ENCODE measurements at regions of chr14 and their contacts with region 1.

Region 1: GRCh38 chr14:105490572-105491366 is at the start of gene TEDC1:
- DNase-seq: peak; percentile 100
- ATAC-seq: peak; percentile 80
- H3K4me3 Mint-ChIP-seq: peak within 1 kb of the TSS; percentile 81
- H3K27ac Mint-ChIP-seq: peak within 1 kb of the TSS; percentile 86
- H3K4me1 Mint-ChIP-seq: peaks cover 22% of the 10 kb centered on the region
- H3K27me3 Mint-ChIP-seq: no peaks in the 10 kb centered on the region
- total RNA-seq, gene TEDC1: 21.7 to 31.8 TPM

Region 2: DNA sequence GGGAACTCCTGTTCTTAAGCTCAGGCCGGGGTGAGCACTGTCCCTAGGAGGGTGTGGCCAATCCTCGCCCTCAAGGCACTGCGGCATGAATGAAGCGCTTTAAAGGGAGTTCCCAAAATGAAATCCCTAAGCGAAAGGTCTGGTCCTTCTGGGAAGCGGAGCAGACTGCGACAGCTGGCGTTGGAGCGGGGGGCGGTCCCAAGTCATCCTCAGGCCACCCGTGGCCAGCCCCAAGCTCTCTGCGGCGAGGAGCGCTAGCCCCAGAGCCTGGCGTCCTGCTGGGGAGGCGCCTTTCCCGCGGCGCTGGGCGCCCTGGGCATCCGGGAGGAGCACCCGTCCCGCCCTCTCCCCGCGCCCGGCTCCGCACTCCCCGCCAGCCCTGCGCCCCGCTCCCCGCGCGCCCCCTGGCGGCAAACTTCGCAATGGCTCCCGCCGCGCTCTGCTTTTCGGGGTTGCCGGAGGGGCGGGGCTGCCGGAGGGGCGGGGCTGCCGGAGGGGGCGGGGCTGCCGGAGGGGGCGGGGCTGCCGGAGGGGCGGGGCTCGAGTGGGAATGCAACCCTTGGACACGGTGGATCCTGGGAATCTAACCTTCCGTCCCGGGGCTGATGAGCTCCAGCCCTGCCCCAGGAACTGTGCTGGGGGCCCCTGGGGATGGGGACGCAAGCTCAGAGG is 664.4 kb before region 1 on chr14:
- CTCF ChIA-PET with region 1: no interaction called
- POLR2A ChIA-PET with region 1: no interaction called
- intact Hi-C with region 1: loop called in 1 of 2 experiments (anchors 1 kb)
- DNase-seq: peak; percentile 97
- ATAC-seq: peak; percentile 93
- H3K4me3 Mint-ChIP-seq: peak overlapping the region; percentile 73
- H3K27ac Mint-ChIP-seq: no peak overlapping the region
- H3K4me1 Mint-ChIP-seq: peaks cover 13% of the 10 kb centered on the region
- H3K27me3 Mint-ChIP-seq: peaks cover 13% of the 10 kb centered on the region

Region 3: DNA sequence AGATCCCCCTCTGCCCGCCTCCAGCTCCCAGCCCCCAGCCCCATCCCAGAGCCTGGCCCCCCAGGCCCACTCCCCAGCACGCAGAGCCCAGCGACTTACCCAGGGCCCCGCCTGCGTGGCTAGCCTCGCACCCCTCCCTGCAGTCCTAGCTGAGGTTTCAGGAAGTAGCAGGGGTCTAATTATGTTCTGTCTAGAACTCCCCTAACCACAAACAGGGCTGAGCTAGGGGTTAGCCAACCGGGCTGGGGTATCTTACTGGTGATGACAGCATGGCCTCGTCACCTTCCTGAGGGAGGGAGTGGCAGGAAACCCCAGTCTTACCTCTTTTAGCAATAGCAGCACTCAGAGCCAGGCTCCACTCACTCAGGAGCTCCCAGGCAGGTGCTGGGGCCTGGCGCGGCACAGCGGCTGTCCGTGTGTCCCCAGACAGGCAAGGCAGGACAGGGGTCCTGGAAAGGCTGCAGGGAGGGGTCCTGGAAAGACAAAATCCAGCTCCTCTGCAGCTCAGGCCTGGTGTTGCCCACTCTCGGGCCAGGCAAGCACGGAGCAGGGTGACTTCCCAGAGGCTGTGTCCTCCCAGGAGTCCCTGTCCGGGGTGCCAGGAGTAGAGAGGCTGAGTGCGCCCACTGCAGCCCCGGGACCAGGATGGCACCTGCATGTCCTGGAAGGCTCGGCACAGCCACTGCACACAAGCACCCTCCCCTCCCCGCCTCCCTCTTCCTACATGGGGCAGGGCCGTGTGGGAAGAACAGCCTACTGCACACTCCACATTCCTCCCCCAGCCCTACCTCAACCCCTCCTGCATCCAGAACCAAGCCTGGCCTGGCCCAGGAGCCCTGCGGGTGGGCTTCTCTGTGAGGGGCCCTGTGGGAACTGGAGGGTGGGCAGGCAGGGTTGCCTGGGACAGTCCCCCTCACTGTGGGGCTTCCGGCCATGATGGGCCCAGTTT is 425.2 kb before region 1 on chr14 and contains the start of gene GPR132:
- CTCF ChIA-PET with region 1: interaction called, 4 read pairs
- POLR2A ChIA-PET with region 1: no interaction called
- intact Hi-C with region 1: loop called (anchors 1 to 10 kb)
- DNase-seq: peak; percentile 93
- ATAC-seq: peak; percentile 78
- H3K4me3 Mint-ChIP-seq: peak within 1 kb of the TSS; percentile 92
- H3K27ac Mint-ChIP-seq: peak within 1 kb of the TSS; percentile 96
- H3K4me1 Mint-ChIP-seq: peaks cover 74% of the 10 kb centered on the region
- H3K27me3 Mint-ChIP-seq: no peaks in the 10 kb centered on the region
- total RNA-seq, gene GPR132: 27.7 to 35.4 TPM

Region 4: DNA sequence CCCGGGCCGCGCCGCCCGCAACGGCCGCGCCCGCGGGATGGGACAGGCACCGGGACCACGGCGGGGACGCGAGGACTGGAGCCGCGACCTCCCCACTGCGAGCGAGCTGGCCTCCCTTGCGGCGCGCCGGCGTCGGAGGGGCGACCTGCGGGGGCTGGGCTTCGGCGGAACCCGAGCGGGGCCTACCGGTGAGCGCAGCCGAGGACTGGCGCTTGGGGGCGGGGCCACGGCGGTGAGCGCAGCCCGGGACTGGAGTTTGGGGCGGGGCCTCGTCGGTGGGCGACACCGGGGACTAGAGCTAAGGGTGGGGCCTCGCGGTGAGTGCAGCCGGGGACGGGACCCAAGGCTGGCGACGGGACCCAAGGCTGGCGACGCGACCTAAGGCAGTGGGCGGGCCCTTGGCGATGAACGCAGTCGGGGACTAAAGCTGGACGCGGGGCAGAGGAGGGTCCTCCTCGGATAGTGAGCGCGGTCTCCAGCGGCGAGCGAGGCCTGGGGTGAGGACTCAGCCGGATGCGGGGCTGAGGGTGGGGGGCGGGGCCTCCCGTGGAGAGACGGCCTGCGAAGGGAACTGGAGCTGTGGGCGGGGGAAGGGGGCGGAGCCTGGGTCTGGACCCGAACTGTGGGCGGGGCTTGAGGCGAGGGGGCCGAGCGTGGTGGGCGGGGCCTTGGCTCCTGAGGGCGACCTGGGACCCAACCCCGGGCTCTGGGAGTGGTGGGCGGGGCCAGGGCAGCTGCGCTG is 189.8 kb before region 1 on chr14 and contains the start of gene BRF1:
- CTCF ChIA-PET with region 1: no interaction called
- POLR2A ChIA-PET with region 1: interaction called, 5 read pairs
- intact Hi-C with region 1: loop called in 1 of 2 experiments (anchors 1 kb)
- DNase-seq: peak; percentile 100
- ATAC-seq: peak; percentile 92
- H3K4me3 Mint-ChIP-seq: peak within 1 kb of the TSS; percentile 86
- H3K27ac Mint-ChIP-seq: peak within 1 kb of the TSS; percentile 86
- H3K4me1 Mint-ChIP-seq: peaks cover 39% of the 10 kb centered on the region
- H3K27me3 Mint-ChIP-seq: no peaks in the 10 kb centered on the region
- total RNA-seq, gene BRF1: 20.0 to 28.1 TPM

Region 5: DNA sequence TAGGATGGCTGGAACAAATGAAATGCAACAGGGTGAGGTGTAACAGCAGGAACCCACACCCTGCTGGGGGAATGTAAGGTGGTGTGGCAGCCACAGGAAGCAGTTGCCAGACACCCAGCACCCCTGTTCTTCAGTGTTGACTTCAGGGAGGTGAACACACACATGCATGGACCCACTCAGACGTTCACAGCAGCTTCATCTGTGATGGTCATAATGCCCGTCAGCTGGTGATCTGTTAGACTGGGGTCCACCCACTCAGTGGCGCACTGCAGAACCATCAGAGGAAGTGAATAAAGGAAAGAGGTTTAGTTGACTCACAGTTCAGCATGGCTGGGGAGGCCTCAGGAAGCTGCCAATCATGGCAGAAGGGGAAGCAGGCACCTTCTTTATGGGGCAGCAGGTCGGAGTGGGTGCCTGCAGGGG is 115.1 kb before region 1 on chr14:
- CTCF ChIA-PET with region 1: interaction called, 74 read pairs
- POLR2A ChIA-PET with region 1: interaction called, 8 read pairs
- intact Hi-C with region 1: loop called (anchors 1 kb)
- DNase-seq: peak; percentile 83
- ATAC-seq: peak; percentile 77
- H3K4me3 Mint-ChIP-seq: no peak overlapping the region
- H3K27ac Mint-ChIP-seq: peak overlapping the region; percentile 78
- H3K4me1 Mint-ChIP-seq: peaks cover 12% of the 10 kb centered on the region
- H3K27me3 Mint-ChIP-seq: no peaks in the 10 kb centered on the region

Region 6: DNA sequence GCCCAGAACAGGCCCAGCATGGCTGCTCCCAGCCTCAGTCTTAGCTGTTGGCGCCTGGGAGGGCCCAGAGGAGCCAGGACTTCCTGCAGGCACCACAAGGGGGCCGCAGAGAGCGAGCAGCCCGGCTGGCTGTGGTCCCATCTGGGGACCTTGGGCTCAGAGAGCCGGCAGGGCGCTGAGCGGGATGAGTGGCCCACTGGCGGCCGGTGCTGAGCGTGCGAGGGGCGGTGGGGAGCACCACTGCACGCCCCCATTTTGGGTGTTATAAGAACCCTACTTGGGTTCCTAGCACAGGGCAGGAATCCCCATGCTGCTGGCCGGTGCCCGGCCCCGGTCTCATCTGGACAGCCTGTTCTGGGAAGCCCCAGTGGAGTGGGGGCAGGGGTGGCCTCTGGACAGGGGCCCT is 42.1 kb before region 1 on chr14:
- CTCF ChIA-PET with region 1: interaction called, 3 read pairs
- POLR2A ChIA-PET with region 1: no interaction called
- intact Hi-C with region 1: loop called in 1 of 2 experiments (anchors 1 kb)
- DNase-seq: peak; percentile 77
- ATAC-seq: peak; percentile 96
- H3K4me3 Mint-ChIP-seq: no peak overlapping the region
- H3K27ac Mint-ChIP-seq: no peak overlapping the region
- H3K4me1 Mint-ChIP-seq: no peaks in the 10 kb centered on the region
- H3K27me3 Mint-ChIP-seq: no peaks in the 10 kb centered on the region